Right lobe of liver (tissue), 6 donors: ENCODE measurements at regions of chr2 and their contacts with region 1.

Region 1: DNA sequence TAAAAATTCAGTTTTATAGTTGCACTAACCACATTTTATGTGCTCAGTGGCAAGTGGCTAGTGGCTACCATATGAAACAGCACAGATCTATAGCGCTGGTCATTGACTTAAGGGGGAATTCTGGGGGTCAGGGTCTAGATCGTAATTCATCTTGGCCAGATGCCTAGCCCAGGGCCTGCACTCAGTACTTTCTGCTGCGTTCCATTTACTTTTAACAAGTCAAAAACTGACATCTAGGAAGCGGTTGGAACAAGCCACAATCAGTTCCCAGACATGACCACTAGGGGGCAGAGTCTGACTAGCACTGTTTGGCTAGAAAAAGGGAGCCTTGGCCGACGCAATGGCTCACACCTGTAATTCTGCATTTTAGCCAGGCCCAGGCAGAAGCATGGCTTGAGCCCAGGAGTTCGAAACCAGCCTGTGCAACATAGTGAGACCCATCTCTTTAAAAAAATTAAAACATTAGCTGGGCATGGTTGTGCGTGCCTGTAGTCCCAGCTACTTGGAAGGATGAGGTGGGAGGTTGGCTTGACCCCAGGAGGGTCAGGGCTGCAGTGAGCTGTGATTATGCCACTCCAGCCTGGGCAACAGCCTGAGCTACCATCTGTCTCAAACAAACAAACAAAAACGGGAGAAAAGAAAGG is 9.0 kb upstream of the TMBIM1 start:
- DNase-seq: peak; percentile 68 to 87 (median 78)
- ATAC-seq: peak; percentile 85 to 93 (median 87)
- H3K4me3 ChIP-seq: no peak overlapping the region
- H3K27ac ChIP-seq: no peak overlapping the region
- H3K4me1 ChIP-seq: peaks cover 0 to 23% (median 10%) of the 10 kb centered on the region in 4 donors
- H3K27me3 ChIP-seq: no peaks in the 10 kb centered on the region
- CTCF ChIP-seq: peak; percentile 96 to 97 (median 96)
- POLR2A ChIP-seq: no peak

Region 2: DNA sequence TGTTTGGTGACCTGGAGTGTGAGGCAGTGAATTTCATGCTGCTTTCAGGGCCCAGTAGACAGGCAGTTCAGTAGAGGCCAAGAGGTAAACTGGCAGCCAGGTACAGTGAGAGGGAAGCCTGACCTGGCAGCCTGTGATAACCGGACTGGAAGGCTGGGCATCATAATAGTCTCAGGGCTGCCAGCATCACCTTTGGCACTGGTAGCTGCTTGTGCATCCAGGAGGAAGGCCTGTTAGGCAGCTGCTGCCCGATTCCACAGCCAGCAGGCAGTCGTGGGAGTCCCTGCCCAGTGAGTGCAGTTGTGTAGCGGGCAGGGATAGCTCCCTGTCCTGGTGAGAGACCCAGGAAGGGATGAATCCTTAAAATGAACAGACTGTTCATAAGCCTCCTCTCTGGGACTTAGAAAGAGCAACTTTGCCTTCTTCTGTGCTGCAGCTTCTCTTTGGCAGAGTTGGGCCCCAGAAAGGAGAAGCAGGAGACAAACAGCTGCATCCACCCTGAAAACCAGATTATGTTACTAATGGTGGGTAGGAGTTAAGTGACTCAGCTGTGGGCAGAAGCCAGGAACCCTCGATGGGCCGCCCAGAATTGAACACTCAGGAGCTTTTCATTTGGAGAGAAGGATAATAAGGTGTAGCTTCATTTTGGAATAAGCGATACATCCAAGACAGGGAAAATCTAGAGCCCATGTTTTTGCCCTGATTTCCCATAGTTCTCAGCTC is 48.6 kb before region 1 on chr2:
- intact Hi-C with region 1: no loop called
- DNase-seq: no peak
- ATAC-seq: no peak
- H3K4me3 ChIP-seq: no peak overlapping the region
- H3K27ac ChIP-seq: no peak overlapping the region
- H3K4me1 ChIP-seq: no peaks in the 10 kb centered on the region
- H3K27me3 ChIP-seq: no peaks in the 10 kb centered on the region
- CTCF ChIP-seq: no peak
- POLR2A ChIP-seq: no peak

Region 3: DNA sequence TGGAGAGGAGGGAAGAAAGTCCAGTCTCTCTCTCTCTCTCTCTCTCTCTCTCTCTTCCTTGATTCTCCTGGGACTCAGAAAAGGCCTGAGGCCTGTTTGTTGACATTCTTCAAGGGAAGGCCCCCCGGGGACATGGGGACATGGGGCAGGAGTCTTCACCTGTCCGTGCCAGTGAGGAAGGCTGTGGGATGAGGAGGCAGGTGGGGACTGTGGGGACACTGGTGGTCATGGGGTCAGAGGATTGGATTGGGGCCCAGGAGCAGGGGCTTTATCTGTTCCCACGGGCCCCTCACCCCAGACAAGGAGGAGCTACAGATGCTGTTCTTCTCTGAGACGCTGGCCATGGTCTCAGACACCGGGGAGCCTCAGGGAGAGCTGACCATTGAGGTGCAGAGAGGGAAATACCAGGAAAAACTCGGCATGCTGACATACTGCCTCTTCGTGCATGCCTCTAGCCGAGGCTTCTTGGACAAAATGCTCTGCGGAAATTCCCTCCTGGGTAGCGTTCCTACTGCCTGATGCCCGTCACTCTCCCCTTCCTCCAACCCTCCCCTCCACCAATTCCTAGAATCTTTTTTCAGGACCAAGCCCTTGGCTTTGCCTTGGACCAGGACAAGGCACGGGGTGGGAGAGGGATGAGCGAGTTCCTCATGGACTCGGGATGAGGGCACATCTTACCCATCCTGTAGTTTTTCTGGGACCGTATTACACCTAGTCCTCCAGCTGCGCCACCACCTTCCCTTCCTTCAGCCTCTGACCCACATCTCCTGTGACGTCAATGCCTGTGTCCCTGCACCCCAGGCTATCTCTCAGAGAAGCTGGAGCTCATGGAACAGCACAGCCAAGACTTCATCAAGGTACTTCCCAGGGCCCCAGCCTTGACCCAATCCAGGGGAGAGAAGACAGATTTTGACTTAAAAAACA is 56.2 kb after region 1 on chr2:
- intact Hi-C with region 1: loop called (anchors 5 to 10 kb)
- DNase-seq: no peak
- ATAC-seq: no peak
- H3K4me3 ChIP-seq: no peak overlapping the region
- H3K27ac ChIP-seq: no peak overlapping the region
- H3K4me1 ChIP-seq: peaks cover 0 to 12% (median 3%) of the 10 kb centered on the region in 4 donors
- H3K27me3 ChIP-seq: no peaks in the 10 kb centered on the region
- CTCF ChIP-seq: no peak
- POLR2A ChIP-seq: no peak

Region 4: DNA sequence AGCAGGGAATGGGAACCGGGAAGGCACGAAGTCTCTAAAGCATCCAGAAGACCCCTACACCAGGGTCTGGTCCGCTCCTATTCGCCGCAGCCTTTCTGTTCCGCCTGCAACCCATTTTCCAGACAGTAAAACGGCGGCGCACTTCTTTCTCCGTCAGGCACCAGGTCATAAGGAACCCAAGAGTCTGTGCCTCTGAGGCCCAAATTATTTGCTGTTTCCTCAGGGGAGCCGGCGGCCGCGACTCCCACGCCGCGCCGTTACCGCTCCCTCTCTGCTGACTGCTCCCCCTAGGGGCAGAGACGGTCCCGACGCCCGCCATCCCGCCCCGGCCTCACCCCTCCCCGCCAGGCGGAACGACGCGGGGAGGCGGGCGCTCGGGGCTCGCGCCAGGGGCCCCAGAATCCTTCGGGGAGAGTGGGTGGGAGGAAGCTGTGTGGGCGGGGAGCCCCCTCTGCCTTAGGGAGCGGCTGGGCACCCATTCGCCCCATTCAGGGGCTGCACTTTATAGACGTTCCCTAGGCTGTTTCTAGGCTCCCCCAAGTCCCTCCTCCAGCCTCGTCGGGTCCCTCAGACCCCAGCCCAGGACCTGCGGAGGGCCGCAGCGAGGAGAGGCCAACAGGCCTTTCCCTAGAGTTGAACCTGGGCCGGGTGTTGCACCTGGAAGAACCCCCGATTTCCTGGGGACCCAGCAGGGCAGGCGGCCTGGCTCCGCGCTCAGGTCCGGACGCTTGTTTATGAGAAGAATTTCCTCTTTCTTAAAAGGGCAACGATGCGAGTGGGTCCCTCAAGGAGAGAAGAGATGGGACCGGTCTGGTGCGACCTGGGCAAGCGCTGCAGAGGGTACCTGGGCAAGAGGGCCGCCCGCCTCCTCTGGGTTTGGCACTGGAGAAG is 94.7 kb after region 1 on chr2:
- intact Hi-C with region 1: loop called in 1 of 2 experiments (anchors 10 kb)
- DNase-seq: peak; percentile 95 to 97 (median 96)
- ATAC-seq: peak; percentile 59 to 76 (median 63)
- H3K4me3 ChIP-seq: peak overlapping the region; percentile 77 to 100 (median 97)
- H3K27ac ChIP-seq: peak overlapping the region; percentile 93 to 100 (median 100)
- H3K4me1 ChIP-seq: peaks cover 0 to 13% (median 0%) of the 10 kb centered on the region in 4 donors
- H3K27me3 ChIP-seq: no peaks in the 10 kb centered on the region
- CTCF ChIP-seq: peak; percentile 86 to 97 (median 89)
- POLR2A ChIP-seq: peak; percentile 59

Region 5: DNA sequence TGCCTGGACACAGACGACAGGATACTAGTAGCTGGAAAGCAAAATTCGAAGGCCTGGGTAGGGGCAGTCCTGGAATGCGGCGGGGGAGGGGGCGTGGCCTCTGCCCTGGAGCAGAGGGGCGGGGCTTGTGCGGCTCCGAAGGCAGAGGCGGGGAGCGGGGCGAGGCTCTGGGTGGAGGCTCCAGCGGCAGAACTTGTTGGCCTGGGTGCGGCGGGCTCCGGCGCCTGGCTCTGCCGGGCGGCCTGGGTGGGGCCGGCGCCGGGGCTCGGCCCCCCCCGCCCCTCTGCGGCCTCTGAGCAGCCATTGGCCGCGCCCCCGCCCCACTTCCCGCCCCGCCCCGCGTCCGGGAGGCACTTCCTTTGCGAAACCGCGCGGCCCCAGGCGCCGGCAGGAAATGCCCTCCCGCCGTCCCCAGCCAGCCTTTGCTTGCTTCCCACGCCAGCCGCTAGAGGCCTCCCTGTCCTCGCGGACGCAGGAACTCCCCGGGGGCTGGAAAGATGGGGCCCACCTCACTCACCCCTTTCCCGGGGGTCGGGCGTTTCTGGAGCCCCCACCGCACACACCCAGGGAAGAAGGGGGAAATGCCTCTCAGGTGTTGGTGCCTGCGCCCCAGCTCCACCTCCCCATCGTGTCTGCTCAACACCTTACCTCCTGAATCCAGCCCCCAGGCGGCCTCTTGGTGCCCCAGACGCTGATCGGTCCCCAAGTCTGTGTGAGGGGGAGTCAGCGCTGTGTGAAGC is 105.1 kb after region 1 on chr2:
- intact Hi-C with region 1: no loop called
- DNase-seq: peak; percentile 98 to 99 (median 99)
- ATAC-seq: peak; percentile 85 to 94 (median 88)
- H3K4me3 ChIP-seq: peak overlapping the region; percentile 40 to 56 (median 53)
- H3K27ac ChIP-seq: peak overlapping the region; percentile 77 to 82 (median 79)
- H3K4me1 ChIP-seq: peaks cover 0 to 44% (median 21%) of the 10 kb centered on the region in 4 donors
- H3K27me3 ChIP-seq: no peaks in the 10 kb centered on the region
- CTCF ChIP-seq: peak; percentile 79 to 83 (median 81)
- POLR2A ChIP-seq: peak; percentile 56